ENCODE measurements at regions of chr7 and their contacts with region 1.

Region 1: DNA sequence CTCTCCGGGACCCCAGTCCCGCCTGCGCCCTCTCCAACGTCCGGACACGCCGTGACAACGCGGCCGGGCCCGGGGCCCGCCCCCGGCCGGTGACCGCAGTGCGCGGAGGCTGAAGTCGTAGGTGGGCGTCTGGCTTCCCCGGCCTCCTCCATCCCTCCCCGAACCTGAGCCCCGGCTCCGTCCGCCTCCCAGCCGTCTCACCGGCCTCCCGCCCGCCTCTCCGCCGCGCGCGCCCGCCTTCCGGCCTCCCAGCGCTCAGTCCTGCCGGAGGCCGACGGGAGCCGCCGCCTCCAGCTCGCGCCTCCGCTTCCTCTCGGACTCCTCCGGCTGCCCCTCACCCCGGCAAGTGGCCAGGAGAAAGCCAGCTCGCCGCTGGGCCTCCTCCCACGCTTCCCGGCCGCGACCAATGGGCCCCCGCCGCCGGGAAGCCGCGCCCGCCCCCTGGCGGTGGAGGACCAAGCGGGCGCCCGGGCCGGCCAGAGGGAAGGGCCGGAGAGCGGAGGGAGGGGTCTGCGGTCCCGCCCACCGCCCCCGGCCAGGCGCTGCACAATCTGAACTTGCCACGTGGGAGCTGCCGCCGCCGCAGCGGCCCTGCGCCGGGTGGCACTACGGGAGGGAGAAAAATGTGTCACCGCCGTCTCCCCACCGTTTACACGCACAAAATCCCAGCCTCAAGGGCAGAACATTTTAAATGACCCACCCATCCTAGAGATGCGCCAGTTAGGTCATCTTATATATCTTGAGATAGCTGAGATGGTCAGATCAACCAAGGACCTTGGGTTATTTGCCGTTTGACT is at the start of gene FAM3C:
- DNase-seq: peak; percentile 51 to 79 (median 75)
- ATAC-seq: peak; percentile 79 to 80
- H3K4me3 Mint-ChIP-seq: peak within 1 kb of the TSS; percentile 80 to 94 (median 88)
- H3K27ac Mint-ChIP-seq: peak within 1 kb of the TSS; percentile 73 to 92 (median 88)
- H3K4me1 Mint-ChIP-seq: peaks cover 9 to 40% (median 24%) of the 10 kb centered on the region in 4 donors
- H3K27me3 Mint-ChIP-seq: no peaks in the 10 kb centered on the region
- polyA plus RNA-seq, gene FAM3C: 8.9 to 12.4 (median 11.9) TPM

Region 2: GRCh38 chr7:121366852-121367431 is 29.2 kb before region 1 on chr7:
- POLR2A ChIA-PET with region 1: interaction called, 10 read pairs
- DNase-seq: peak in 5 of 10 donors; percentile 9 to 60 (median 57)
- ATAC-seq: no peak
- H3K4me3 Mint-ChIP-seq: no peak overlapping the region
- H3K27ac Mint-ChIP-seq: peak overlapping the region in 2 of 10 donors; percentile 58 to 90
- H3K4me1 Mint-ChIP-seq: peaks cover 0 to 46% (median 4%) of the 10 kb centered on the region in 4 donors
- H3K27me3 Mint-ChIP-seq: no peaks in the 10 kb centered on the region

Region 3: DNA sequence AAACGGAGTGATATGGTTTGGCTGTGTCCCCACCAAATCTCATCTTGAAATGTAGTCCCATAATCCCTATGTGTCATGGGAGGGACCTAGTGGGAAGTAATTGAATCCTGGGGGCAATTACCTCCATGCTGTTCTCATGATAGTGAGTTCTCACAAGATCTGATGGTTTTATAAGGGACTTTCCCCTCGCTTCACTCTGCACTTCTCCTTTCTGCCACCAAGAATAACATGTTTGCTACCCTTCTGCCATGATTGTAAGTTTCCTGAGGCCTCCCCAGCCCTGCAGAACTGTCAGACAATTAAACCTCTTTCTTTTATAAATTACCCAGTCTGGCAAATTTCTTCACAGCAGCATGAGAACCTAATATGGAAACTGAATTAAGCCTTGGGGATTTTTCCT is 19.2 kb before region 1 on chr7:
- POLR2A ChIA-PET with region 1: no interaction called
- DNase-seq: no peak
- ATAC-seq: no peak
- H3K4me3 Mint-ChIP-seq: no peak overlapping the region
- H3K27ac Mint-ChIP-seq: peak overlapping the region in 2 of 10 donors; percentile 17 to 55
- H3K4me1 Mint-ChIP-seq: peaks cover 0 to 53% (median 4%) of the 10 kb centered on the region in 4 donors
- H3K27me3 Mint-ChIP-seq: no peaks in the 10 kb centered on the region

Region 4: DNA sequence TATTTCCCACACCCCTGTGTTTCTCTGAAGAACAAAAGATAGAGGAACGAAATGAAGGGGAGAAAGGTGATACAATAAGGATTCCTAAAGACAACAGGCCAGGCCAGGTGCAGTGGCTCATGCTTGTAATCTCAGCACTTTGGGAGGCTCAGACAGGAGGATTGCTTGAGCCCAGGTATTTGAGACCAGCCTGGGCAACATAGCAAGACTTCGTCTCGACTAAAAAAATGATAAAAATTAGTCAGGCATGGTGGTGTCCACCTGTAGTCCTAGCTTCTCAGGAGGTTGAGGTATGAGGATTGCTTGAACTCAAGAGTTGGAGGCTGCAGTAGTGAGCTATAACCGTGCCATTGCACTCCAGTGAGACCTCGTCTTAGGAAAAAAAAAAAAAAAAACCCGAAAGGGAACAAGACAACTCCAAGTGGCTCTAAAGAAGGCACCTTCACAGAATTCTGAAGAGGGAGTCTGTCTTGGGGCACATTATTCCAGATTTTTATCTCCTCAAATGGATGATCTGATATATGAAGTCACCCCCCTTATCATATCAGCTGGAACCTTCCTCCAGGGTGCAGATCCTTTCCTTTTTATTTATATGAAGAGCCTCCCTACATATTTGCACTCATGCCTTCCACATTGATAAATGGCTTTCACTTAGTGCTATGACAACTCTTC is 41.4 kb after region 1 on chr7:
- POLR2A ChIA-PET with region 1: interaction called, 14 read pairs
- DNase-seq: no peak
- ATAC-seq: peak in 1 of 2 donors; percentile 23
- H3K4me3 Mint-ChIP-seq: peak overlapping the region; percentile 62 to 88 (median 80)
- H3K27ac Mint-ChIP-seq: peak overlapping the region in 8 of 10 donors; percentile 87 to 97 (median 94)
- H3K4me1 Mint-ChIP-seq: peaks cover 14 to 41% (median 33%) of the 10 kb centered on the region in 4 donors
- H3K27me3 Mint-ChIP-seq: no peaks in the 10 kb centered on the region